Naive thymus-derived CD4-positive, alpha-beta T cell (primary cell): ENCODE measurements at regions of chr13 and their contacts with region 1.

Region 1: DNA sequence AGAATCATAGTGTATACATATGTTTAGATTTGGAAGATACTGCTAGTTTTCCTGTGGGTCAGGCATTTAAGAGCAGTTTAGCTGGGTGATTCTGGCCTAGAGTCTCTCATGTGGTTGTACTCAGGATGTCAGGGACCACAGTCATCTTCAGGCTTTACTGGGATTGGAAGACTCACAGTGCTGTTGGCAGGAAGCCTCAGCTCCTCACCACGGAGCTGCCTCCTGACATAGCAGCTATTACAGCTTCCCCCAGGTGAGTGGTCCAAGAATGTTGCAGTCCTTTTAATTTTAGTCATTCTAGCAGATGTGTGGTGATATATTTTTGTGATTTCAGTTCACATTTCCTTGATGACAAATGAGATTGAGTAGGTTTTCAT is 16.9 kb upstream of the GPR18 start:
- DNase-seq: peak in 4 of 9 donors; percentile 33 to 41 (median 38)
- ATAC-seq: peak; percentile 52
- H3K4me3 ChIP-seq: peak overlapping the region; percentile 5
- H3K4me3 Mint-ChIP-seq: peak overlapping the region; percentile 31 to 77 (median 67)
- H3K27ac ChIP-seq: peak overlapping the region; percentile 49
- H3K27ac Mint-ChIP-seq: peak overlapping the region; percentile 83 to 95 (median 92)
- H3K4me1 ChIP-seq: peaks cover 61 to 89% of the 10 kb centered on the region in 2 donors
- H3K4me1 Mint-ChIP-seq: peaks cover 64 to 100% (median 98%) of the 10 kb centered on the region in 7 donors
- H3K27me3 ChIP-seq: no peaks in the 10 kb centered on the region
- H3K27me3 Mint-ChIP-seq: no peaks in the 10 kb centered on the region

Region 2: GRCh38 chr13:99288089-99288488 is 13.0 kb after region 1 on chr13:
- CTCF ChIA-PET with region 1: interaction called, 16 read pairs
- POLR2A ChIA-PET with region 1: interaction called, 11 read pairs
- intact Hi-C with region 1: no loop called
- DNase-seq: no peak
- ATAC-seq: no peak
- H3K4me3 ChIP-seq: no peak overlapping the region
- H3K4me3 Mint-ChIP-seq: peak overlapping the region in 8 of 10 donors; percentile 3 to 76 (median 54)
- H3K27ac ChIP-seq: peak overlapping the region; percentile 32
- H3K27ac Mint-ChIP-seq: peak overlapping the region; percentile 60 to 96 (median 89)
- H3K4me1 ChIP-seq: peaks cover 69 to 79% of the 10 kb centered on the region in 2 donors
- H3K4me1 Mint-ChIP-seq: peaks cover 64 to 97% (median 93%) of the 10 kb centered on the region in 7 donors
- H3K27me3 ChIP-seq: no peaks in the 10 kb centered on the region
- H3K27me3 Mint-ChIP-seq: no peaks in the 10 kb centered on the region

Region 3: DNA sequence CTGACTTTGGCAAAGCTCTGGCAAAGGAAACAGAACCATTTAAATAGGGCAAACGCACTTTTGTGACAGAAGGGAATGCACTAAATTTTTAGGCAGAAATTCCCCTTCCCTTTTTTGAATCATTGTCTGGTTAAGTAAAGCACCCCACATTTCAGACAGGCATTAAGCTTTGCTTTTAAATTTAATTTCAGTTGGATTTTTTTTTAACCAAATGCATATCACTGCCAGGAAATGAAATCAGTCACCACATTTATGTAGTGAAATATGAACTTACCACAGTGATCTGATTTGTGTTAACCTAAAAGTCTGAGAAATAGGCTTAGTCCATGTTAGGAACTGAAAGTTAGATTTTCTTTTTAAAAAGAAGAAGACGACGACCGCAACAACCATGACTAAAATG is 21.3 kb after region 1 on chr13:
- CTCF ChIA-PET with region 1: interaction called, 19 read pairs
- POLR2A ChIA-PET with region 1: interaction called, 208 read pairs
- intact Hi-C with region 1: no loop called
- DNase-seq: peak in 6 of 9 donors; percentile 49 to 69 (median 57)
- ATAC-seq: peak; percentile 59
- H3K4me3 ChIP-seq: peak overlapping the region; percentile 28
- H3K4me3 Mint-ChIP-seq: peak overlapping the region; percentile 73 to 91 (median 82)
- H3K27ac ChIP-seq: peak overlapping the region; percentile 73
- H3K27ac Mint-ChIP-seq: peak overlapping the region; percentile 89 to 98 (median 93)
- H3K4me1 ChIP-seq: peaks cover 78 to 81% of the 10 kb centered on the region in 2 donors
- H3K4me1 Mint-ChIP-seq: peaks cover 60 to 94% (median 88%) of the 10 kb centered on the region in 7 donors
- H3K27me3 ChIP-seq: no peaks in the 10 kb centered on the region
- H3K27me3 Mint-ChIP-seq: no peaks in the 10 kb centered on the region